ENCODE measurements at regions of chr13 and their contacts with region 1.

Region 1: DNA sequence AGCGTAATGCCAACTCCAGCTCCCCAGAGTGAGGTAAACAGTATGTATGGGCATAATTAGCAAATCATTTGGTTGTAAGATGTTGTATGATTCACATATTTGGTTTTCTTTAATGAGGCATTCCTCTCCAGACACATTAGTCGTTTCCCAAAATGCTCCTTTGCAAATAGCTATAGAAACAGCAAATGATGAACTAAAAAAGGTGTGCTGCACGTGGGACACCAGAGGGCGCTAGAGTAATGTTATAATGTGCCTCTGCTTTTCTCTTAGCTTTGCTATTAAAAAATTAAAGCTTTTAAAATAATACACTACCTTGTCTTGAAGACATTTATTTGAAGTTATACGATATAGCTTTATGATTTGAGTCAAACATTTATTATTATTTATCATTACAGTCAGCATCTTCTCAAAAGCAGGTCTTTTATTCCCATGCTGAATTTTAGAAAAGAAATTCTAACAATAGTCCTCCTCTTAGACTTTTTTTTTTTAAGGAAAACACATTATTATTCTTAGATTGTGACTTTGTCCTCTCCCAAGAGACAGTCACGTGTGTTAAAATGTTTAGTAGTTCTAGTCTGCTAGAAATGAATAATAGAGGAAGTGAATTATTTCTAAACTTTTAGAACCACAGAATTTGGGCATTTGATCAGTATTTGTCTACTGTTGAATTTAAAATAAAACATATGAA is 121.6 kb upstream of the FRY start:
- DNase-seq: peak; percentile 37
- ATAC-seq: peak; percentile 73
- H3K4me3 ChIP-seq: no peak overlapping the region
- H3K27ac ChIP-seq: no peak overlapping the region
- H3K4me1 ChIP-seq: no peaks in the 10 kb centered on the region
- H3K27me3 ChIP-seq: no peaks in the 10 kb centered on the region; a peak in 2 of 4 replicates
- CTCF ChIP-seq: peak; percentile 73 to 86 (median 84)
- EP300 ChIP-seq: peak in 1 of 2 experiments; percentile 39; a peak in 1 of 4 replicates
- POLR2A ChIP-seq: no peak
- RAD21 ChIP-seq: peak; percentile 91

Region 2: DNA sequence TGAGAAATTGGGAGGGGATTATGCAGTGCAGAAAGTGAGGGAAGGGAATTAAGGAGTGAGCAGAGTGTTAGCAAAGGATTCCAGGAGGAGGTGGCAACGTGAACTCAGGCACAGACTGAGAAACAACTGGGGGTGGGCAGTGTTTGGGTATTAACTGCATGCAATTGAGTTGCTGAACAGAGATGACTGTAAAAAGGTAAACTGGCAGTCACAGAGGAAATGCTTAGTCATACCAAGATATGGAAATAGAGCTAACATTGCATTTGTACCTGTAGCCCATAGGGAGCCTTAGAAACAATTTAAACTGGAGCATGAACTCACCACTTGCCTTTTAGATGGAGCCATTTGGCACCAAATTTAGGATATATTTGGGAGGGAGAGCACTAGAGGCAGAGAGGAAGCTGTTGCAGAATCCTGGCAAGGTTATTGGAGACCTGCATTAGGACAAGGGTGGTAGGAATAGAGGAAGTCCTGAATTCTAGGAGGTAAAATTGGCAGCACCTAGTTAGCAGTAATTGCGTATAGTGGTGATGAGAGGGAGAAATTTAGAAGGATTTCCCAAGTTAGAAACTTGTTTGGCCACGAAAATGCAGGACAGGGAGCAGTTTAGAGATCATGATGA is 21.0 kb after region 1 on chr13:
- CTCF ChIA-PET with region 1: interaction called, 26 read pairs
- POLR2A ChIA-PET with region 1: interaction called, 4 read pairs
- RAD21 ChIA-PET with region 1: interaction called, 19 read pairs
- SMC1A ChIA-PET with region 1: interaction called, 33 read pairs
- in situ Hi-C with region 1: no loop called
- intact Hi-C with region 1: no loop called
- DNase-seq: peak; percentile 70
- ATAC-seq: peak; percentile 98
- H3K4me3 ChIP-seq: no peak overlapping the region; the same call in 1 of the 2 replicates
- H3K27ac ChIP-seq: no peak overlapping the region
- H3K4me1 ChIP-seq: peaks cover 11% of the 10 kb centered on the region
- H3K27me3 ChIP-seq: no peaks in the 10 kb centered on the region
- CTCF ChIP-seq: no peak
- EP300 ChIP-seq: peak in 1 of 2 experiments; percentile 67; a peak in 1 of 4 replicates
- POLR2A ChIP-seq: no peak
- RAD21 ChIP-seq: no peak

Region 3: GRCh38 chr13:31965361-31966066 is 55.5 kb after region 1 on chr13:
- CTCF ChIA-PET with region 1: interaction called, 19 read pairs
- POLR2A ChIA-PET with region 1: interaction called, 3 read pairs
- RAD21 ChIA-PET with region 1: interaction called, 18 read pairs
- SMC1A ChIA-PET with region 1: interaction called, 20 read pairs
- in situ Hi-C with region 1: no loop called
- intact Hi-C with region 1: no loop called
- DNase-seq: peak; percentile 84
- ATAC-seq: peak; percentile 94
- H3K4me3 ChIP-seq: no peak overlapping the region
- H3K27ac ChIP-seq: peak overlapping the region; percentile 41; the same call in 1 of the 2 replicates
- H3K4me1 ChIP-seq: peaks cover 16% of the 10 kb centered on the region
- H3K27me3 ChIP-seq: no peaks in the 10 kb centered on the region
- CTCF ChIP-seq: no peak
- EP300 ChIP-seq: peak; percentile 73 to 92; a peak in 3 of 4 replicates
- POLR2A ChIP-seq: no peak
- RAD21 ChIP-seq: 0 out of 2 replicates have a peak, but pooled peaks have one; percentile 5

Region 4: DNA sequence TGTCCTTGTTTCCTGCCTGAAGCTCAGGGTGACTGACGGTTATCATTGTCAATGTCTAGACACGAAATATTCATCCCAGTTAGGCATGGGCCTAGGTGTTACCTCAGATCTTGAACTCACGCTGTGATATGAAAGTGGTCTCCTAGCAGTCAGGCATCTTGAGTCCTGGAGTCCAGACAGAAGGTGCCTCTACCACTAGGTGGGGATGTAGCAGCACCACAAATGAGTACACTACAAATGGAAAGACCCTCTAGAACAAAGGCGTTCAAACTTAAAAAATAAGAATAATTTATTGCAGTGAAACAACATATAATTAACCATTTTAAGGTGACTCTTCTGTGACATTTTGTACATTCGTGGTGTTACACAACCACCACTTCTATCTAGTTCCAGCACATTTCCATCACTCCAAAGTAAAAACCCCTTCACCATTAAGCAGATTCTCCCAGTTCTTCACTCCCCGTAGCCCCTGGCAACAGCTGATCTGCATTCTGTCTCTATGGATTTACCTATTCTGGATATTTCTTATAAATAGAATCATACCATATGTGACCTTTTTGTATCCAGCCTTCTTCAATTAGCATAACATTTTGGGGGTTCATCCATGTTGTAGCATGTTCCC is 109.7 kb after region 1 on chr13:
- CTCF ChIA-PET with region 1: interaction called, 8 read pairs
- POLR2A ChIA-PET with region 1: no interaction called
- RAD21 ChIA-PET with region 1: interaction called, 12 read pairs
- SMC1A ChIA-PET with region 1: interaction called, 10 read pairs
- in situ Hi-C with region 1: no loop called
- intact Hi-C with region 1: loop called (anchors 2 kb)
- DNase-seq: peak; percentile 17
- ATAC-seq: peak; percentile 93
- H3K4me3 ChIP-seq: no peak overlapping the region
- H3K27ac ChIP-seq: no peak overlapping the region
- H3K4me1 ChIP-seq: no peaks in the 10 kb centered on the region; the same call in 1 of the 2 replicates
- H3K27me3 ChIP-seq: no peaks in the 10 kb centered on the region
- CTCF ChIP-seq: peak; percentile 63 to 77 (median 76)
- EP300 ChIP-seq: no peak
- POLR2A ChIP-seq: no peak
- RAD21 ChIP-seq: peak; percentile 89

Region 5: DNA sequence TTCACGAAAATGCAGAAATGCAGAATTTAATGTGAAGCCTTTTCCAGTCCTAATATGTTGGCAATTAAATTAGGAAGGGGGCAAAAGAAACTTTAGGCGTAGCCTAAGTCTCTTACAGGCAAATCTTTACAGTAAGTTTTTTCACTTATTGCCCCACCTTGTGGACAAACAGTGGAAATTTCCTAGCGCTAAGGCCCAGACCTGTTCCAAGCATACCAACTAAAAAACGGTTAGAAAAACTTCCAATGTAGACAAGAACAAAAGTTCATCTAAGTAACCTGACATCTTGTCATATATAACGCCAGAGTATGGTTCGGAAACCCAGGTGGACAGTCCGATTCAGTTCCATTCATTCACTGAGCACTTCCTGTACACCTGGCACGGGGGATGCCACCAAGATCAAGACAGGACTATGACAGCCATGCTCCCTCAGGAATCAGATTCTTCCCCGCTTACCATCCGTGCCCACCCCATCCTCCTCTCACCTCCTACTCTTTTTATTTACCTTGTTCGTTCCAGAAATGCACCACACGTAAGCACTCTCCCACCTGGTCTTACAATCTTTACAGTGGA is 400.2 kb after region 1 on chr13:
- CTCF ChIA-PET with region 1: interaction called, 28 read pairs
- POLR2A ChIA-PET with region 1: no interaction called
- RAD21 ChIA-PET with region 1: interaction called, 14 read pairs
- SMC1A ChIA-PET with region 1: interaction called, 14 read pairs
- in situ Hi-C with region 1: loop called (anchors 5 kb)
- intact Hi-C with region 1: loop called (anchors 1 kb)
- DNase-seq: no peak
- ATAC-seq: peak; percentile 84
- H3K4me3 ChIP-seq: no peak overlapping the region
- H3K27ac ChIP-seq: no peak overlapping the region
- H3K4me1 ChIP-seq: peaks cover 8% of the 10 kb centered on the region
- H3K27me3 ChIP-seq: no peaks in the 10 kb centered on the region
- CTCF ChIP-seq: peak; percentile 61 to 73 (median 67)
- EP300 ChIP-seq: no peak
- POLR2A ChIP-seq: no peak
- RAD21 ChIP-seq: peak; percentile 66